ENCODE measurements at regions of chr4 and their contacts with region 1.

Region 1: GRCh38 chr4:185096032-185096653 is 46.9 kb upstream of the SLC25A4 start:
- DNase-seq: peak; percentile 36
- ATAC-seq: no peak
- H3K4me3 Mint-ChIP-seq: no peak overlapping the region
- H3K27ac Mint-ChIP-seq: no peak overlapping the region
- H3K4me1 Mint-ChIP-seq: no peaks in the 10 kb centered on the region
- H3K27me3 Mint-ChIP-seq: peaks cover 8% of the 10 kb centered on the region

Region 2: DNA sequence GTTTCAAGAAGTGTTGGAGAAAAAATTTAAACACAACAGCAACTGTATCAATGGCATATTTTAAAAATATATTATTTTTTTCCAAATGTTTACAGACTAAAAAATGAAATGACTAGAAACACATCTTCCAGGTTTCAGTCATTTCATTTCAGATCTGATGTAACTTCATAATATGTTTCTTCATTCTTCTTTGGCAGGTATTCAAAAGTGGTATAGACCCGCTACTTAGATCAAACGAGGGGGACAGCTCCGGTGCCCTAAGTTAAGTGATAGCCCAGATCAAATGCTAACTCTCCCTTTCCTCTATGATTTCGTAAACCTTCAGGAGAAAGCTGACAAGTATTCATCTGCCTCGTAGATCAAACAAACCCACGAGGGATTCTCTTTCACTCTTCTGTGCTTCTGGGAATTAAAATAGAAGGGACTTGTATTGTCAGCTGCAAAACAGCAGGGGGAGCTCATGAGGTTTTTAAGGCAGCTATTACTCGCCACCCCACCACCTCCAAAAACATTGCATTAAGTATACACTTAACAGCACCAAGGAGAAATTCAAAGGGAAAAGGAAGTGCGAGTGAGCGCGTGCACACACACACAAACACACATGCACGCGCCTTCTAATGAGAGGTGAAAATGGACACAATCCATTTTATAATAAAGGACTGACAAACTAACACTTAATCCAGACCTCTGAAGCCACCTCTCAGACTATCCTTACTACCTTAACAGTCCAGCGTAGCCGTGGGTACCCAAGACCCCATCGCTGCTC is 56.5 kb before region 1 on chr4:
- CTCF ChIA-PET with region 1: interaction called, 42 read pairs
- POLR2A ChIA-PET with region 1: no interaction called
- DNase-seq: peak; percentile 63
- ATAC-seq: peak; percentile 77
- H3K4me3 Mint-ChIP-seq: peak overlapping the region; percentile 3
- H3K27ac Mint-ChIP-seq: no peak overlapping the region
- H3K4me1 Mint-ChIP-seq: peaks cover 7% of the 10 kb centered on the region
- H3K27me3 Mint-ChIP-seq: peaks cover 20% of the 10 kb centered on the region

Region 3: DNA sequence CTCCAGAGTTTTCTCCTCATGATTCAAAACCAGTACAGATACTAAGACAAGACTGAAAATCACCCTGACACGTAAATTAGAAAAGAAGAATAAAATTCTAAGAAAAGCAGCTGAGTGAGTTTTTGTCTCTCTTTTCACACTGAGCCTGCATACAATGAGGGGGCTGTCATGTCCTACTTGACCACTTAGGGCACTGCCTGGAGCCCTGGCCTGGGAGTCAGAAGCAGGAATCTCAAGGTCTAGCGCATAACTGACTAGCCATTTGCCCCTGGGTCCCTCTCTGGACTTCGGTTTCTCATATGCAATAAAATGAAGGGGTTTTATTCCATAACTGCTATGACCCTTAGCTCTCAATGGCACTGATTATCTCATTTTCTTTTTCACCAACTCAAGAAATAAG is 10.2 kb after region 1 on chr4:
- CTCF ChIA-PET with region 1: interaction called, 11 read pairs
- POLR2A ChIA-PET with region 1: no interaction called
- DNase-seq: no peak
- ATAC-seq: no peak
- H3K4me3 Mint-ChIP-seq: no peak overlapping the region
- H3K27ac Mint-ChIP-seq: no peak overlapping the region
- H3K4me1 Mint-ChIP-seq: no peaks in the 10 kb centered on the region
- H3K27me3 Mint-ChIP-seq: peaks cover 25% of the 10 kb centered on the region